ENCODE measurements at regions of chr7 and their contacts with region 1.

Region 1: DNA sequence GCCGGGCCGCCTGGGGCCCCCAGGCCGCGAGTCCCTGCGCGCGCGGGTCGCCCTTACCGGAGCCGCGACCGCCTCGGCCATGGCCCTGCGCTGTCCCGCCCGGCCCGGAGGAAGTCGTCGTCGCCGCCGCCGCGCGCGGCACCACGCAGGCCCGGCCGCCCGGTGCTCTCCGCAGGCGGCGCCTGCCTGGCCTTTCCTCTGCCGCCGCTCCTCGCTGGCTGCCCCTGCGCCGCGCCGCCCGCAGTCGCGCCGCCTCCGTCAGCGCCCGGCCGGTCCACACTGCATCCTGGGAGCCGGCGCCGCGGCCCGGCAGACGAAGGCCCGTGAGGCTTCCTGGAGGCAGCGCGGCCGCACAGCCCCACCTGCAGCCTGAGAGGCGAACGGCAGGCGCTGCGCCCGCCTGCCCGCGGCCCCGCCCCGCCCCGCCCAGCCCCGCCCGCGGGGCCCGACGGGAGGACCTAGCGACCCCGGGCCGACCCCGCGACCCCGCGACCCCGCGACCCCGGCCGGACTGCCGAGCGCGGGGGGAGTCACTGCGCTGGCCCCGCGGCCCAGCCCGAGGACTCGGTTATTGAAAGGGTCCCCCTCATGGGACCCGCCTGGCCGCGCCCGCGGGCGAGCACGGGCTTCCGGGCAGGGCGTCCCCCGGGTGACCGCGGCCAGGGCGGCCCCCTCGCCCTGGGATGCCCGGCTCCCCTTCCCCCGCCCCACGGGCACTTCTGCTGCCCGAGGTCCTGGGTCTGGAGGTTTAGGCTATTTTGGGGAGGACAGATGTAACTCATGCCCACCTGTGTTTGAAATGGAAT is at the start of gene ZNF746:
- DNase-seq: peak; percentile 58 to 92 (median 74)
- ATAC-seq: peak; percentile 92
- H3K4me3 ChIP-seq: peak within 1 kb of the TSS; percentile 73
- H3K4me3 Mint-ChIP-seq: peak within 1 kb of the TSS; percentile 96
- H3K27ac ChIP-seq: peak within 1 kb of the TSS in 1 of 2 donors; percentile 43
- H3K27ac Mint-ChIP-seq: peak within 1 kb of the TSS; percentile 96
- H3K4me1 ChIP-seq: peaks cover 25% of the 10 kb centered on the region
- H3K4me1 Mint-ChIP-seq: peaks cover 27% of the 10 kb centered on the region
- H3K27me3 ChIP-seq: no peaks in the 10 kb centered on the region
- H3K27me3 Mint-ChIP-seq: no peaks in the 10 kb centered on the region
- CTCF ChIP-seq: peak; percentile 27
- total RNA-seq, gene ZNF746: 28.4 to 30.3 TPM

Region 2: GRCh38 chr7:149005241-149006050 is 492.2 kb before region 1 on chr7:
- CTCF ChIA-PET with region 1: no interaction called
- POLR2A ChIA-PET with region 1: no interaction called
- intact Hi-C with region 1: loop called in 1 of 2 experiments (anchors 10 kb)
- DNase-seq: peak; percentile 75 to 92 (median 80)
- ATAC-seq: peak; percentile 90
- H3K4me3 ChIP-seq: no peak overlapping the region
- H3K4me3 Mint-ChIP-seq: no peak overlapping the region
- H3K27ac ChIP-seq: no peak overlapping the region
- H3K27ac Mint-ChIP-seq: peak overlapping the region; percentile 46
- H3K4me1 ChIP-seq: peaks cover 12% of the 10 kb centered on the region
- H3K4me1 Mint-ChIP-seq: peaks cover 6% of the 10 kb centered on the region
- H3K27me3 ChIP-seq: no peaks in the 10 kb centered on the region
- H3K27me3 Mint-ChIP-seq: no peaks in the 10 kb centered on the region
- CTCF ChIP-seq: peak; percentile 95

Region 3: GRCh38 chr7:149125863-149126661 is 371.6 kb before region 1 on chr7 and contains the start of gene ZNF425:
- CTCF ChIA-PET with region 1: no interaction called
- POLR2A ChIA-PET with region 1: no interaction called
- intact Hi-C with region 1: loop called in 1 of 2 experiments (anchors 5 kb)
- DNase-seq: peak; percentile 87 to 96 (median 93)
- ATAC-seq: peak; percentile 83
- H3K4me3 ChIP-seq: peak within 1 kb of the TSS; percentile 100
- H3K4me3 Mint-ChIP-seq: peak within 1 kb of the TSS; percentile 100
- H3K27ac ChIP-seq: peak within 1 kb of the TSS; percentile 79 to 80
- H3K27ac Mint-ChIP-seq: peak within 1 kb of the TSS; percentile 96
- H3K4me1 ChIP-seq: peaks cover 12% of the 10 kb centered on the region
- H3K4me1 Mint-ChIP-seq: peaks cover 24% of the 10 kb centered on the region
- H3K27me3 ChIP-seq: no peaks in the 10 kb centered on the region
- H3K27me3 Mint-ChIP-seq: no peaks in the 10 kb centered on the region
- CTCF ChIP-seq: peak; percentile 94
- total RNA-seq, gene ZNF425: 0.22 to 0.39 TPM

Region 4: GRCh38 chr7:149261829-149262617 is 235.6 kb before region 1 on chr7 and contains the start of gene ZNF783:
- CTCF ChIA-PET with region 1: no interaction called
- POLR2A ChIA-PET with region 1: no interaction called
- intact Hi-C with region 1: loop called (anchors 2 to 5 kb)
- DNase-seq: peak; percentile 75 to 97 (median 83)
- ATAC-seq: peak; percentile 91
- H3K4me3 ChIP-seq: peak within 1 kb of the TSS; percentile 56
- H3K4me3 Mint-ChIP-seq: peak within 1 kb of the TSS; percentile 89
- H3K27ac ChIP-seq: peak within 1 kb of the TSS; percentile 41 to 42
- H3K27ac Mint-ChIP-seq: peak within 1 kb of the TSS; percentile 80
- H3K4me1 ChIP-seq: peaks cover 28% of the 10 kb centered on the region
- H3K4me1 Mint-ChIP-seq: peaks cover 38% of the 10 kb centered on the region
- H3K27me3 ChIP-seq: no peaks in the 10 kb centered on the region
- H3K27me3 Mint-ChIP-seq: no peaks in the 10 kb centered on the region
- CTCF ChIP-seq: peak; percentile 57
- total RNA-seq, gene ZNF783: 27.6 to 29.0 TPM

Region 5: DNA sequence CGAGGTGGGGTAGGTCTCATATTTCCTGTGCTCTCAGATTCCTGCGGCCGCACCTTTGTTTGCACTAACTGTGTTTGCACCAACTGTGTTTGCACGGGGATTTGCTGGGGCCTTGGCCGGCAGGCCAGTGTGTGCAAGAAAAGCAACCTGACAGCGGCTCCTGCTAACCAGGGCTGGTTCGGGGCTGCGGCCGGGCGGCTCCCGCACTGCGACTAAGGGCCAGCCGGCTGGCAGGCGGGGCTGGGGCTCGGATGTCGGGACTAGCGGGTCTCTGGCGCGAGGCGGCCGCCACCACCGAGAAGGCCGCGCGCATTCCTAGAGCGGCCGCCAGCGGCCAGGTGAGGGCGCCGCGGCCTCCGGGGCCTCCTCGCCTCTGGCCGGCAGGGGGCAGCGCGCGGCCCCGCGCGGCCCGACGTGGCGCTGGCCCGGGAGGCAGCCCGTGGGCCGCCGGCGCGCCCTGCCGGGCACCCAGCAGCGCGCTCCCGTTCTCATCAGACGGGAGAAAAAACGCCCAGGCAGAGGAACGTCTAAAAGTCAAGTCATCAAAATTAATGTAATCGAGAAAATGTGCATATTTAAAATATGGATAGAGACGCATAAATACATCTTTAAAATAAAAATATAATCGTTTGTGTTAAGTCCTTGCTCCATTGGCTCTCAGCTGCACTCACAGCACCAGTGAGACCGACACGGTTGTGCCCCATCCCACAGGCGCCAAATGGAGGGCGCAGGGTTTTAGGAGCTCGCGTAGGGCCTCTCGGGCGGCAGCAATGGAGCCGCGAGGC is 75.3 kb before region 1 on chr7:
- CTCF ChIA-PET with region 1: interaction called, 3 read pairs
- POLR2A ChIA-PET with region 1: no interaction called
- intact Hi-C with region 1: loop called (anchors 1 to 5 kb)
- DNase-seq: peak; percentile 33 to 93 (median 69)
- ATAC-seq: peak; percentile 92
- H3K4me3 ChIP-seq: peak overlapping the region; percentile 75
- H3K4me3 Mint-ChIP-seq: peak overlapping the region; percentile 70
- H3K27ac ChIP-seq: peak overlapping the region; percentile 16 to 76
- H3K27ac Mint-ChIP-seq: peak overlapping the region; percentile 68
- H3K4me1 ChIP-seq: peaks cover 17% of the 10 kb centered on the region
- H3K4me1 Mint-ChIP-seq: no peaks in the 10 kb centered on the region
- H3K27me3 ChIP-seq: no peaks in the 10 kb centered on the region
- H3K27me3 Mint-ChIP-seq: no peaks in the 10 kb centered on the region
- CTCF ChIP-seq: peak; percentile 29

Region 6: GRCh38 chr7:149624419-149625339 is 127.0 kb after region 1 on chr7:
- CTCF ChIA-PET with region 1: interaction called, 5 read pairs
- POLR2A ChIA-PET with region 1: interaction called, 3 read pairs
- intact Hi-C with region 1: loop called (anchors 2 to 10 kb)
- DNase-seq: peak; percentile 79 to 97 (median 88)
- ATAC-seq: peak; percentile 88
- H3K4me3 ChIP-seq: peak overlapping the region; percentile 83
- H3K4me3 Mint-ChIP-seq: peak overlapping the region; percentile 98
- H3K27ac ChIP-seq: peak overlapping the region in 1 of 2 donors; percentile 41
- H3K27ac Mint-ChIP-seq: peak overlapping the region; percentile 70
- H3K4me1 ChIP-seq: peaks cover 47% of the 10 kb centered on the region
- H3K4me1 Mint-ChIP-seq: peaks cover 40% of the 10 kb centered on the region
- H3K27me3 ChIP-seq: no peaks in the 10 kb centered on the region
- H3K27me3 Mint-ChIP-seq: peaks cover 3% of the 10 kb centered on the region
- CTCF ChIP-seq: peak; percentile 88

Region 7: DNA sequence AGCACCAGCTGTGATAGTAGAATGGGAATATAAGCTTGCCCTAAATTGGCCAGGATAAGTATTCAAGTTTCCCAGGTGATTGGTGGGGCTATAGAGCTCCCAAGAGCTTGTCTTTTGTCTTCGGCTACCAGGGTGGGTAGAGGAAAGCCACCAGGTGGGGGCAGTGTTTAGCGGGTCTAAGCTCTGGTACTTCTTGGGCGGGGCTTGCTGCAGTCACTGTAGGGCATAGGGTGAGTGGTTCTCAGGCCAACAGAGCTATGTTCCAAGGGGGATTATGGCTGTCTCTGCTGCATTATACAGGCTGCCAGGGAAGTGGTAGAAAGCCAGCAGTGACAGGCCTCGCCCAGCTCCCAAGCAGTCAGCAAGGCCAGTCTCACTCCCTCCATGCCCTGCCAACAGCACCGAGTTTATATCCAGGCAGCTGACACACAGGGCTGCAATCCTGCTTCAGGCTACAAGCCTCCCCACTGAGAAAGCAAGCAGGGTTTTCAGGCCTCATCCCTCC is 165.0 kb after region 1 on chr7:
- CTCF ChIA-PET with region 1: no interaction called
- POLR2A ChIA-PET with region 1: no interaction called
- intact Hi-C with region 1: no loop called
- DNase-seq: peak; percentile 33 to 74 (median 55)
- ATAC-seq: peak; percentile 80
- H3K4me3 ChIP-seq: no peak overlapping the region
- H3K4me3 Mint-ChIP-seq: no peak overlapping the region
- H3K27ac ChIP-seq: no peak overlapping the region
- H3K27ac Mint-ChIP-seq: no peak overlapping the region
- H3K4me1 ChIP-seq: no peaks in the 10 kb centered on the region
- H3K4me1 Mint-ChIP-seq: no peaks in the 10 kb centered on the region
- H3K27me3 ChIP-seq: peaks cover 0 to 6% of the 10 kb centered on the region in 2 experiments
- H3K27me3 Mint-ChIP-seq: peaks cover 75% of the 10 kb centered on the region
- CTCF ChIP-seq: peak; percentile 38

Region 8: GRCh38 chr7:149873074-149873969 is 375.7 kb after region 1 on chr7 and contains the start of gene ATP6V0E2:
- CTCF ChIA-PET with region 1: no interaction called
- POLR2A ChIA-PET with region 1: no interaction called
- intact Hi-C with region 1: no loop called
- DNase-seq: peak; percentile 82 to 96 (median 90)
- ATAC-seq: peak; percentile 66
- H3K4me3 ChIP-seq: peak within 1 kb of the TSS; percentile 75
- H3K4me3 Mint-ChIP-seq: peak within 1 kb of the TSS; percentile 95
- H3K27ac ChIP-seq: peak within 1 kb of the TSS; percentile 37 to 77
- H3K27ac Mint-ChIP-seq: peak within 1 kb of the TSS; percentile 92
- H3K4me1 ChIP-seq: peaks cover 78% of the 10 kb centered on the region
- H3K4me1 Mint-ChIP-seq: peaks cover 80% of the 10 kb centered on the region
- H3K27me3 ChIP-seq: no peaks in the 10 kb centered on the region
- H3K27me3 Mint-ChIP-seq: no peaks in the 10 kb centered on the region
- CTCF ChIP-seq: no peak
- total RNA-seq, gene ATP6V0E2: 23.2 to 24.9 TPM

Measured in CD4-positive, alpha-beta T cell (primary cell).